Aorta (tissue), 5 donors: ENCODE measurements at regions of chr2 and their contacts with region 1.

Region 1: GRCh38 chr2:85490861-85491755 is 47.9 kb upstream of the MAT2A start:
- DNase-seq: no peak
- ATAC-seq: no peak
- H3K4me3 ChIP-seq: no peak overlapping the region
- H3K27ac ChIP-seq: no peak overlapping the region
- H3K4me1 ChIP-seq: no peaks in the 10 kb centered on the region
- H3K27me3 ChIP-seq: no peaks in the 10 kb centered on the region

Region 2: GRCh38 chr2:85437488-85438284 is 53.4 kb before region 1 on chr2:
- intact Hi-C with region 1: loop called in 1 of 2 experiments (anchors 10 kb)
- DNase-seq: peak; percentile 92 to 96
- ATAC-seq: peak; percentile 91
- H3K4me3 ChIP-seq: peak overlapping the region in 1 of 2 donors; percentile 58
- H3K27ac ChIP-seq: peak overlapping the region; percentile 23 to 80
- H3K4me1 ChIP-seq: no peaks in the 10 kb centered on the region
- H3K27me3 ChIP-seq: no peaks in the 10 kb centered on the region

Region 3: DNA sequence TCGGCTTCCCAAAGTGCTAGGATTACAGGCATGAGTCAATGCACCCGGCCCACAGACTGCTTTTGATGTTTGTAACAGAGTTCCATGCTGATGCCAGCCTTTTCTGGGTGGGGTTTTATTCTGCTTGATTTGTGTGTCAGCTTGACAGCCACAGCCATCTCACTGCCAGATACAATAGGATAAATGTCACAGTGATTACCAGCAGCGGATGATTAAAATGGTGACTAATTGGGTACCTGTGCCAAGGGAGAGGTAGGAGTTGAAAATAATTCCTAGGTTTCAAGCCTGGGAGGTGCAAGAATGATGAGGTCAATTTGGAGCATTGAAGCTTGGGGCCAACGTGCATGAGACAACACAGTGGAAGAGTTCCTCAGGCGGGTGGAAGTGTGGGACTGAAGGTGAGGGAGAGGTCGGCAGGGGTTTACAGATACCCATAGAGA is 33.2 kb before region 1 on chr2:
- intact Hi-C with region 1: no loop called
- DNase-seq: no peak
- ATAC-seq: no peak
- H3K4me3 ChIP-seq: no peak overlapping the region
- H3K27ac ChIP-seq: no peak overlapping the region
- H3K4me1 ChIP-seq: no peaks in the 10 kb centered on the region
- H3K27me3 ChIP-seq: no peaks in the 10 kb centered on the region

Region 4: GRCh38 chr2:85718009-85718391 is 226.9 kb after region 1 on chr2:
- intact Hi-C with region 1: no loop called
- DNase-seq: no peak
- ATAC-seq: no peak
- H3K4me3 ChIP-seq: no peak overlapping the region
- H3K27ac ChIP-seq: no peak overlapping the region
- H3K4me1 ChIP-seq: no peaks in the 10 kb centered on the region
- H3K27me3 ChIP-seq: no peaks in the 10 kb centered on the region